ENCODE measurements at regions of chr3 and their contacts with region 1.

Region 1: DNA sequence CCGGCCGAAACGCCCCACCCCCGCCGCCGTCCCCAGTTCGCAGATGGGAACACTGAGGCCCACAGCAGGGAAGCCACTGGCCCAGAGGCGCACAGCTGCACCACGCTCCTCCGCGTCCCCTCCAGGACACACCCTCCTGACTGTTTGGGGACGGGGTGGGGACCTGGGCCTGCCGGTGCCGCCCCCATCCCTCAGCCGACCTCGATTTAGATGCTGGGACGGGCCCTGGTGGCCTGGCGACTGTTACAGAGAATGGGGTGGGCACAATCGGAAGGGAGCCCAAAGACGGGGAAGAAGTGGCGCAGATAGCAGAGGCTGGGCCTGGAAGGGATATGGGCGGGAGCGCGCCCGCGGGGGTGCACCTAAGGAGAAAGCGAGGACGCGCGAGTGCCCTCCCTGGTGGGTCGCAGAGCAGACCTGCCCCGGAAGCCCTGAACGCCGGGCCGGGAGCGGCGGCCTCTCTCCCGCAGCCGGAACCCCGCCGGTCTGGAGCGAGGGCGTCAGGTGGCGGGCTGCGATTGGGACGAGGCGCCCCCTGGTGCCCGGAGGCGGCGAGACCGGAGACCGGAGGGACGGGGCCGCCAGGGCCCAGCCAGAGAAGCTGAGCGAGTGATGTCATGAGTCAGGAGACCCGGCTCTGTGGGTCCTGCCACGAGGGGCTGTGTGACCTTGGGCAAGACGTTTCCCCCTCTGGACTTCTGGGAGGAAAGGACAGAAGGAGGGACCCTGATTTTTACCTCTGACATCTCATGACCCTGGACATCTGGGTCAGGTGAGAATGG is 78.4 kb downstream of the IQSEC1 start:
- DNase-seq: peak; percentile 84
- H3K4me3 Mint-ChIP-seq: peak overlapping the region; percentile 76
- H3K27ac Mint-ChIP-seq: no peak overlapping the region
- H3K4me1 Mint-ChIP-seq: peaks cover 32% of the 10 kb centered on the region
- H3K27me3 Mint-ChIP-seq: no peaks in the 10 kb centered on the region

Region 2: GRCh38 chr3:12984023-12984823 is 10.6 kb before region 1 on chr3:
- CTCF ChIA-PET with region 1: interaction called, 22 read pairs
- POLR2A ChIA-PET with region 1: interaction called, 3 read pairs
- DNase-seq: peak; percentile 56
- H3K4me3 Mint-ChIP-seq: no peak overlapping the region
- H3K27ac Mint-ChIP-seq: no peak overlapping the region
- H3K4me1 Mint-ChIP-seq: peaks cover 45% of the 10 kb centered on the region
- H3K27me3 Mint-ChIP-seq: no peaks in the 10 kb centered on the region

Region 3: DNA sequence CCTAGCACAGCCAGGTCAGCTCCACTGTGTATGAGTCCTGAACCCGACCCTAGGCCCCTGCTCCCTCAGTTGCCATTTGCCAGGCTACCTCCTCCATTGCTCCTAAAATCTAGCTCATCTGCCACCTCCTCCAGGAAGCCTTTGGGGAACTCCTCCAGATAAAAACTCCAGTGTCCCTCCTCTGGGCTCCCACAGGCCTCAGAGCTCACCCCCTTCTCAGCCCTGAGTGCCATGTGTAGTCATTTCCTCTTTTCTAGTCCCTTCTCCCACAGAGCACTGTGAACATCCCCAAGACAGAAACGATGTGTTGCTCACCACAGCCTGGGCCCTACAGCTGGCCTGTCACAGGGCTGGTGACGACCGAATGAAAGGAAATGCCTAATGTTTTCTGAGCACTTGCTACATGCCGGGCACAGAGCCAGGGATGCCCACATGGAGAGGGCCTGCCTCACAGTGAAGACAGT is 17.5 kb after region 1 on chr3:
- CTCF ChIA-PET with region 1: interaction called, 66 read pairs
- POLR2A ChIA-PET with region 1: interaction called, 21 read pairs
- DNase-seq: peak; percentile 69
- H3K4me3 Mint-ChIP-seq: peak overlapping the region; percentile 78
- H3K27ac Mint-ChIP-seq: peak overlapping the region; percentile 100
- H3K4me1 Mint-ChIP-seq: peaks cover 78% of the 10 kb centered on the region
- H3K27me3 Mint-ChIP-seq: no peaks in the 10 kb centered on the region